A673 (cell line): ENCODE measurements at regions of chrX and their contacts with region 1.

Region 1: DNA sequence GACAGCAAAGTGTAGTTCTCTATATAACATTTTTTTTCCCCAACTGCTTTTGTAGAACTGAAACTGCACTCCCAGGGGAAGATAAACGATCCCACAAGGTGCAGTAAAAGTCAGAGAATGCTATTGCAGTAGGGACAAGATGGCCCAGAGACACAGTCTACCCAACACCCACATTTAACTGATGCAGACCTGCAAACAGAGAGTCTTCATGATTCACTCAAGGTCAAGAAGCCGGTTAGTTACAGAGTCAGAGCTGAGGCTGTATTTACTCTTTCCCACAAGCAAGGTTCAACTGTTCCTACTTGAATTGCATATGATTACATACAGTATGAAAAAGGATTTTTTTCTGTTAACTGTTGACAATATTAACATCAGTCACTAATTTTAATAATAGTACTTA is 654.6 kb downstream of the IL1RAPL1 start:
- DNase-seq: no peak
- H3K4me3 ChIP-seq: no peak overlapping the region
- H3K27ac ChIP-seq: no peak overlapping the region
- H3K4me1 ChIP-seq: peaks cover 9% of the 10 kb centered on the region
- H3K27me3 ChIP-seq: no peaks in the 10 kb centered on the region
- CTCF ChIP-seq: no peak

Region 2: GRCh38 chrX:28126886-28127285 is 1114.9 kb before region 1 on chrX:
- CTCF ChIA-PET with region 1: no interaction called
- POLR2A ChIA-PET with region 1: no interaction called
- intact Hi-C with region 1: no loop called
- DNase-seq: no peak
- H3K4me3 ChIP-seq: no peak overlapping the region
- H3K27ac ChIP-seq: no peak overlapping the region
- H3K4me1 ChIP-seq: no peaks in the 10 kb centered on the region
- H3K27me3 ChIP-seq: no peaks in the 10 kb centered on the region
- CTCF ChIP-seq: no peak

Region 3: GRCh38 chrX:28756647-28757046 is 485.2 kb before region 1 on chrX:
- CTCF ChIA-PET with region 1: no interaction called
- POLR2A ChIA-PET with region 1: no interaction called
- intact Hi-C with region 1: no loop called
- DNase-seq: no peak
- H3K4me3 ChIP-seq: no peak overlapping the region
- H3K27ac ChIP-seq: no peak overlapping the region
- H3K4me1 ChIP-seq: no peaks in the 10 kb centered on the region
- H3K27me3 ChIP-seq: no peaks in the 10 kb centered on the region
- CTCF ChIP-seq: no peak

Region 4: GRCh38 chrX:29067351-29067750 is 174.5 kb before region 1 on chrX:
- CTCF ChIA-PET with region 1: no interaction called
- POLR2A ChIA-PET with region 1: no interaction called
- intact Hi-C with region 1: no loop called
- DNase-seq: no peak
- H3K4me3 ChIP-seq: no peak overlapping the region
- H3K27ac ChIP-seq: no peak overlapping the region
- H3K4me1 ChIP-seq: no peaks in the 10 kb centered on the region
- H3K27me3 ChIP-seq: no peaks in the 10 kb centered on the region
- CTCF ChIP-seq: no peak

Region 5: DNA sequence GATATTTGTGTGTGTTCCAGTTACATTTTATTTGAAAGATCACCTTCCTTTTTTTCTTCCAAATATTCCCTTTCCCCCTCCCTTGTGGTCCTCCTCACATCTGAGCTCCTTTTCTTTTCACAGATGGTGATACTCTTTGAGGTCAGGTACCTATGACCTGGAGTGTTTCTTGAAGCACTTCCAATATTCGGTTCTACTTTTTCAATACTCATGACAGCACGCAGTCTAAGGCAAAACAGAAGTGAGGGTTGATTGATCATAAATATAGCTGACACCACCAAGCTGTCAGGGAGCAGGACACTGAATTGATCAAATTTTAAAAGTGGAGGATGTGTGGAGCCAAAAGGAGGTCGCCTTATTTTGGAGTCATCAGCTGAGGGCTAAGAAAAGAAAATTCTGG is 639.2 kb after region 1 on chrX:
- CTCF ChIA-PET with region 1: no interaction called
- POLR2A ChIA-PET with region 1: no interaction called
- intact Hi-C with region 1: loop called (anchors 10 kb)
- DNase-seq: no peak
- H3K4me3 ChIP-seq: no peak overlapping the region
- H3K27ac ChIP-seq: no peak overlapping the region
- H3K4me1 ChIP-seq: no peaks in the 10 kb centered on the region
- H3K27me3 ChIP-seq: peaks cover 2% of the 10 kb centered on the region
- CTCF ChIP-seq: no peak